Calu3 (cell line): ENCODE measurements at regions of chr13 and their contacts with region 1.

Region 1: GRCh38 chr13:50357586-50358118 is 342.4 kb downstream of the KCNRG start:
- DNase-seq: peak; percentile 56
- H3K4me3 Mint-ChIP-seq: peak overlapping the region; percentile 44
- H3K27ac Mint-ChIP-seq: peak overlapping the region; percentile 64
- H3K4me1 Mint-ChIP-seq: peaks cover 15% of the 10 kb centered on the region
- H3K27me3 Mint-ChIP-seq: no peaks in the 10 kb centered on the region
- CTCF ChIP-seq: no peak

Region 2: GRCh38 chr13:50123862-50124536 is 233.7 kb before region 1 on chr13:
- CTCF ChIA-PET with region 1: no interaction called
- intact Hi-C with region 1: no loop called
- DNase-seq: peak; percentile 91
- H3K4me3 Mint-ChIP-seq: peak overlapping the region; percentile 89
- H3K27ac Mint-ChIP-seq: peak overlapping the region; percentile 82
- H3K4me1 Mint-ChIP-seq: peaks cover 14% of the 10 kb centered on the region
- H3K27me3 Mint-ChIP-seq: no peaks in the 10 kb centered on the region
- CTCF ChIP-seq: no peak

Region 3: DNA sequence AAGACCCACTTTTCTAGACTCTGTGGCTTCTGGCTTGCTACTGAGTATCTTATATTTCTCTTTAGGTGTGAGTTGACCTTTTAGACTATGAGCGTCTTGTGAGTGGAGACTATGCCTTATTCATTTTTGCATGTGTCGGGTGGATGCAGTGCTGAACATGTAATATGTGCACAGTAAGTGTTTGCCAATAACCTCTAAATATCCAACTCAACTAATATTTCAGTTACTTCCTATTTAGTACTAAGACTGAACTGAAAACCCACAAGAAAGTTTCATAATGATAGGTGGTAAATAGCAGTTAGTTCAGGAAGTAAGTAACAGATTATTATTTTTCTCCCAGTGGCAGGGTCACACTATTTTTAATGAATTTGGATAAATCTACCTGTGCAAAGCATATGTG is 73.1 kb before region 1 on chr13:
- CTCF ChIA-PET with region 1: no interaction called
- intact Hi-C with region 1: loop called (anchors 10 kb)
- DNase-seq: no peak
- H3K4me3 Mint-ChIP-seq: no peak overlapping the region
- H3K27ac Mint-ChIP-seq: no peak overlapping the region
- H3K4me1 Mint-ChIP-seq: no peaks in the 10 kb centered on the region
- H3K27me3 Mint-ChIP-seq: no peaks in the 10 kb centered on the region
- CTCF ChIP-seq: no peak

Region 4: DNA sequence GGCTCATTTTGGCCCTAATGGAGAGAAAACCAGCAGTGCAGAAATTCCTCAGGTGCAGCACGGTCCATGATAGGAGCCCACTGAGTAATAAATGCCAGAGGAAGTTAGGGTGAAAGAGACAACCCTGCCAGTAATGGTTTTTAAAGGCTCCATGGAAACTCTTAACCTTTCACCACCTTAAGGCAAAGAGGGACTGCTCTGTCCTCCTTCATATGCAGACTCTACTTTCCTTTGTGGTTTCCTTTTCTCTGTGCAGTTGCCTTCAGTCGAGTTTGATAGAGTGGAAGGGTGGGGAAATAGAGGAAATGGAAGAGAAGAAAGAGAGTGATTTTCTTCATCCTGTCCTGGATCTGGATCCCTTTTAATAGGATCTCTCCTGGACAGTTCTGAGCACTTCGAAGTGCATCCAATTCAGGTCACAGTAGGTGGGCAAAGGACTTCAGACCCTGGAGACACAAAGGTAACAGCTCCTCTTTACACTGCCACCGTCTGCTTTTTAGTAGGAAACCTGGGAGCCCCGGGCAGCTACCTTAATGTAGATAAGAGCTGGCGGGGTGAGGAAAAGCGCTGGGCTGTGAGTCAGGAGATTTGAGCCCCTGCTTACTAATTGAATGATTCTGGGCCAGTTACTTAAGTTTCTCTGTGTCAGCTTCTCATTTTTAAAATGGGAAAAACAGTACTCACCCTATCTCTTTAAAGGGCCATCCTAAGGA is 47.6 kb before region 1 on chr13:
- CTCF ChIA-PET with region 1: no interaction called
- intact Hi-C with region 1: no loop called
- DNase-seq: no peak
- H3K4me3 Mint-ChIP-seq: no peak overlapping the region
- H3K27ac Mint-ChIP-seq: no peak overlapping the region
- H3K4me1 Mint-ChIP-seq: no peaks in the 10 kb centered on the region
- H3K27me3 Mint-ChIP-seq: no peaks in the 10 kb centered on the region
- CTCF ChIP-seq: no peak

Region 5: DNA sequence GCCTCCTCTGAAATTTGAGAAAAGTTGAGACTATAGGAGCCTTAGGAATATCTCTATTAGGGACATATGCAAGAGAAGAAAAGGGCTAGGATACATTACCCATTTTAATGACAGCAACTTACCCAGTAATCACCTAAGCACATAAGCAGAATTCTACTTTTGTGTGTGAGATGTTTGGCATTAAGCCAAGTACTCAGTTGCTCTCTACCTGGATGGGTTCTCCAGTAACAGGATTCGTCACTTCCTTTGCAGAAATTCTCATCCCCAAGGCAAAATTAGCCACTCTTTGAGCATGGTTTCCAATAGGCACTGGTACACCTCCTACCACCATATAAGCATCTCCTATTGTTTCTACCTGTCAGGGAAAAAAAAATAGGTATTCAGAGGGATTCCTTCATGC is 658.3 kb after region 1 on chr13:
- CTCF ChIA-PET with region 1: no interaction called
- intact Hi-C with region 1: no loop called
- DNase-seq: no peak
- H3K4me3 Mint-ChIP-seq: no peak overlapping the region
- H3K27ac Mint-ChIP-seq: no peak overlapping the region
- H3K4me1 Mint-ChIP-seq: no peaks in the 10 kb centered on the region
- H3K27me3 Mint-ChIP-seq: no peaks in the 10 kb centered on the region
- CTCF ChIP-seq: no peak